ENCODE measurements at regions of chr17 and their contacts with region 1.

Region 1: GRCh38 chr17:4366327-4367063 is at the start of gene UBE2G1:
- DNase-seq: peak; percentile 95 to 100 (median 97)

Region 2: DNA sequence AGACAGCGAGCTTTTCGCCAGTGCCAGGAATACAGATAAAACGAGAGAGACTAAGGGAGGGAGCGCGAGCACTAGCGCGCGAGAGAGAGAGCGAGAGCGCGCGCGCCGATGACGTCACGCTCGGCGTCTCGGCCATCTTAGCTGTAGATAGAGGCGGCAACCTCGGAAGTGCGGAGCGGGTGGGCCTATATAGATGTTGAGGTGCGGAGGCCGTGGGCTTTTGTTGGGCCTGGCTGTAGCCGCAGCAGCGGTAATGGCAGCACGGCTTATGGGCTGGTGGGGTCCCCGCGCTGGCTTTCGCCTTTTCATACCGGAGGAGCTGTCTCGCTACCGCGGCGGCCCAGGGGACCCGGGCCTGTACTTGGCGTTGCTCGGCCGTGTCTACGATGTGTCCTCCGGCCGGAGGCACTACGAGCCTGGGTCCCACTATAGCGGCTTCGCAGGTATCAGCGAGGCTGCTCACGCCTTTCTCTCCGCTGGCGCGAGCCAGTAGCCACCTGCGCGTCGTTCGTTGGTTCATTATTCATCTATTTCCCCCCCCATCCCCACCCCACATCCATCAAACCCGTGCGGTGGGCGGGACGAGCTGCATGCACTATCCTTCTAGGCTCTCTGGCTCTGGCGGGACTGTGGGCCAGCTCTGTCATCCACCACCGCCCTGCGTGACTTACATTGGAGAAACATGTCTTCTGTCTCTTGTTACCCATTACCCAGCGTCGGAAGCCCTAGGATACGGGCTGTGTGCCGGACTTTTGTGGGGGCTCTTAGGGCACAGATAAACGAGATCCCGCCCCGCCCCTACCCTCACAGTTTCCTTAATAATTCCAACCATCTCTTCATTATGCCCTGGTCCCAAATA is 222.7 kb before region 1 on chr17:
- intact Hi-C with region 1: loop called (anchors 2 kb)
- DNase-seq: peak; percentile 78 to 98 (median 89)

Region 3: DNA sequence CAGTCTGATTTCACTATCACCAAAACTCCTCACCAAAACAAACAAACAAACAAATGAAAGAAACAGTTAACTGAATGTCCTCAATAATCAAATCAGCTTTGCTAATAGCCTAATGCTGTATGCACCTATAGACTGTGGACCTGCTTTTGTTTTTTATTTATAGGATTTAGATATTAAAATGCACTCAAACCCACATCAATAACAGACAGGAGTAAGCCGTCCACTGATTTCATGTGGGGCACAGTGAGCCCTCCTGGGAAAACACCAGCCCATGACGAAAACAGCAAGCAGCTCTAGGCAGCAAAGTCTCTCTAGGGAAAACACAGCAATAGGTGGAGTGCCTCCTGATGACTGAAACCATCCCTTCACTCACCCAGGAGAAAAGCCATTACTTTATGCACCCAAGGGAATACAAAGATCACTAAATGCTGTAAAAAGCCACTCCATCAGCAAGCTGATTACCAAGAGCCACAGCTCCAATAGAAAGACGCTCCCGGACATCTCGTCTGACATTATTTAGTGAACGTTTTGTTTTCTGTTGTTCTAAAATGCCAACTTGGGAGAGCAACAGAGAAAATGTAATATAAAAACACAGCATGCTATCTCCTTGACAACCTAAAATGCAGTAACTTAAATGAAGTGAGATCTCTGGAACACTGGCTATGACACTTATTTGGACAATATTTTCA is 150.5 kb before region 1 on chr17:
- intact Hi-C with region 1: loop called (anchors 1 kb)
- DNase-seq: peak in 1 of 10 donors; percentile 60

Region 4: DNA sequence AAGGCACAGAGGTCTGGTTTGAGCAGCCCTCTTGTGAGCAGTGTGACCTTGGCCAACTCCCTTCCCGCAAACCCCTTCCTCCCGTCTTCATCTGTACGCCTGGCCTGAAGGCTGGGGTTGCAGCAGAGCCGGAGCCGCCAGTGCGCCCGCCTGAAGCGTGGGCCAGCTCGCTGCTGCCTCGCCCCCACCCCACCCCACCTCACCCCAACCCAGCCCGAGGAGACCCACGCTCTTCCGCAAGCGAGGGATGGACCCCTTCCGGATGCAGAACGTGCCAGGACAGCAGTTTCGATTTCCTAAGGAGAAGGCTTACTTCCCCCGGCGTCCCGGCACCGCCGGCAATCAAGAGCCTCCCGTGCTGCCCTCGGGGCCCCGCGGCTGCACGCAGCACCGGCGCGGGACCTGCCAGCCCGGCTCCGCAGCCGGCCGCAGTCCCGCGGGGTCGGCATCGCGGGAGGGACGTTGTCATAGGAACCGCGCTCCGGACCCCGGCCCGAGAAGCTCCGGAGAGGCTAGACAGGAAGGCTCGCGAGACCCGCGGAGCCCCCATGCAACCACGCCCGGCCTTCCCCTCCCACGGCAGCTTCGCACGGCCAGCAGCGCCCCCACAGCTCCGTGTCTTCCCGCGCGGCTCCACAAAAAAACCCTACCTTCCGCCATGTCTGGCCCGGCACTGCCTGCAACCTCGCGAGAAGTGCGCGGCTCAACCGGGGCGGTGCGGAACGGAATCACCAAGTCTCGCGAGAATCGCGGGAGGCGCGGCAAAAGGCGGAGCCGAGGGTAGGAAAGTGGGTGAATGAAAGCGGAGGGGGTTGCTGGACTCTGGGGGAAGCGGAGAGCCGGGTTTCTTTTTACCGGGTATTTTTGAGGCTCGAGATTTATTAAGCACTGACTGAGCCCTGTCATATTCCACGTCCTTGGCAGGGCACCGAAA is 102.9 kb before region 1 on chr17 and contains the start of gene ANKFY1:
- intact Hi-C with region 1: loop called (anchors 2 kb)
- DNase-seq: peak; percentile 93 to 99 (median 98)

Region 5: DNA sequence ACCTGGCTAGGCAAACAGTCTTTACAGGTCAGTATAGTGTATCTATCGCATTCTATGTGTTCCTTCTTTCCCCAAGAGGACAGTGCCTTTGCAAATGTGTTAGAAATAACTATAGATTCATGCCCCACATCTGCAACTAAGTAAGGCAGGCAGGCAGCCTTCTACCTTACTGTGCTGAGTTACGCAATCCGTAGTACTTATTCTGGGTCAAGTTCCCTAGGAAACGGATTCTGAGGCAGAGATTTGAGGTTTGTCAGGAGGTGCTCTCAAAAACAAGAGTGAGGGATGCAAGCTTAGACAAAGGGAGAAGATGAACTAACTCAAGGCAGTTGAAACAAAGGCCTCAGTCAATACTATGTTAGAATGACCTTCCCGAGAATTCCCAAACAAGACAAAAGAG is 90.0 kb before region 1 on chr17:
- intact Hi-C with region 1: no loop called
- DNase-seq: no peak

Region 6: GRCh38 chr17:4304417-4305027 is 62.0 kb before region 1 on chr17:
- intact Hi-C with region 1: loop called (anchors 5 kb)
- DNase-seq: peak in 3 of 10 donors; percentile 26 to 60 (median 50)

Region 7: GRCh38 chr17:4412933-4413831 is 46.7 kb after region 1 on chr17:
- intact Hi-C with region 1: loop called (anchors 2 kb)
- DNase-seq: peak; percentile 83 to 98 (median 94)